ENCODE measurements at regions of chr10 and their contacts with region 1.

Region 1: DNA sequence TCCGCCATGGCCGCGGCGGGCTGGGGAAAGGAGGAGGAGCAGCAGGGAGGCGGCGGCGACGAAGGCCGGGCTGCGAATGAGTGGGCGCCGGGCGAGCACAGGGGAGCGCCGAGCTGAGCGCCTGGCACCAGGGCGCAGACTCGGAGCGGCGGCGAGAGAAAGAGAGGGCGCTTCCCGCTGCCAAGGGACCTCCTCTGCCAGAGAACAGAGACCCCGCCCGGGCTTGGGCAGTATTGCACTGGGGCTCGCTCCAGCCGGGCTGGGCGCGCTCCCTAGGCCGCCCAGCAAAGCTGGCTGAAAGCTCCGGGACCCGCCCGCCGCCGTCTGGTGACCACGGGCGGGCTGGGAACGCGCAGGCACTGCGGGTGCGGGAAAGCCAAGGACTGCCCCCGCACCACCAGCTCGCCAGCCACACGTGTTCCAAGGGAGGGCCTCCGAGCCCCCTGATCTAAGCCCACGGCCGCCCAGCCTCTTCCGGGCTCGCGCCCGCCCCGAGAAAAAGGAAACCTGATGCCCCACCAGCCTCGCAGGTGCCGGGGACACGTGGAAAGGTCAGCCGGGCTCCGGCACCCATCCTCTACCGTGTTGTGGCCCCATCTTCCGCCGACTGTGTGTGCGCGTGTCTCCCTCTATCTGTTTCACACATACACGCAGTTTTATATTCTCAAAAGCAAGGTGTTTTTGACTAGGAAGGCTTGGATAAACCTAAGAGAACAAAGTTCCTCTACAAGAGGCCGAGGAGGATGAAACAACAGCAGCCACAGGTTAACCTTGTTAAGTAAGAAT is at the start of gene CCDC6:
- DNase-seq: peak; percentile 93 to 96 (median 96)
- ATAC-seq: peak; percentile 90 to 96 (median 96)
- H3K4me3 ChIP-seq: peak within 1 kb of the TSS; percentile 76 to 98 (median 92)
- H3K27ac ChIP-seq: peak within 1 kb of the TSS; percentile 83 to 96 (median 91)
- H3K4me1 ChIP-seq: peaks cover 0 to 52% (median 29%) of the 10 kb centered on the region in 12 donors
- H3K27me3 ChIP-seq: no peaks in the 10 kb centered on the region
- CTCF ChIP-seq: peak; percentile 68 to 87 (median 80)
- POLR2A ChIP-seq: peak in 1 of 2 donors; percentile 88
- total RNA-seq, gene CCDC6: 13.8 to 47.1 (median 20.2) TPM

Region 2: GRCh38 chr10:59865101-59865500 is 41.5 kb before region 1 on chr10:
- intact Hi-C with region 1: loop called in 6 of 10 experiments (anchors 2 to 5 kb)
- DNase-seq: peak in 1 of 5 donors; percentile 42
- ATAC-seq: peak; percentile 65 to 86 (median 72)
- H3K4me3 ChIP-seq: no peak overlapping the region
- H3K27ac ChIP-seq: peak overlapping the region in 3 of 12 donors; percentile 12 to 57 (median 16)
- H3K4me1 ChIP-seq: peaks cover 0 to 39% (median 19%) of the 10 kb centered on the region in 12 donors
- H3K27me3 ChIP-seq: no peaks in the 10 kb centered on the region
- CTCF ChIP-seq: peak in 11 of 12 donors; percentile 17 to 60 (median 44)
- POLR2A ChIP-seq: no peak